BJ (cell line): ENCODE measurements at regions of chr5 and their contacts with region 1.

Region 1: DNA sequence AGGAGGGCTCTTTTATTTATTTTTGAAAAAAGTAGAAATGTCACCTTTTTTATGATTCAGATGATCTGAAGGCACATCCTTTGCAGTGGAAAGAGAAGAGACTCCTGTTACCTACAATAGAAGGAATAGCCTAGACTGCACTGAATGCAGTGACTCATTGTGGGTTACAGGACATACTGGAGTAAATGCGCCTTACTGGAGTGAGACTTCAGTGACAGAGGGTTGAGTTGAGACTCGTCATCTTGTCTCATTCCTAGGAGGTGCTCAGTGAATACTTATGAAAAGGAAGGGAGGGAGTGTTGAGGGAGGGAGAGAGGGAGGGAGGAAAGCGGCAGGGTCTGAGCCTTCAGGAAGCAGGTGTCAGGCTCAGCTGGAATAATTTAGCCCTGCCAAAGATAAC is 25.2 kb downstream of the ANKRA2 start:
- DNase-seq: no peak
- H3K4me3 ChIP-seq: no peak overlapping the region
- H3K27me3 ChIP-seq: no peaks in the 10 kb centered on the region
- CTCF ChIP-seq: no peak

Region 2: DNA sequence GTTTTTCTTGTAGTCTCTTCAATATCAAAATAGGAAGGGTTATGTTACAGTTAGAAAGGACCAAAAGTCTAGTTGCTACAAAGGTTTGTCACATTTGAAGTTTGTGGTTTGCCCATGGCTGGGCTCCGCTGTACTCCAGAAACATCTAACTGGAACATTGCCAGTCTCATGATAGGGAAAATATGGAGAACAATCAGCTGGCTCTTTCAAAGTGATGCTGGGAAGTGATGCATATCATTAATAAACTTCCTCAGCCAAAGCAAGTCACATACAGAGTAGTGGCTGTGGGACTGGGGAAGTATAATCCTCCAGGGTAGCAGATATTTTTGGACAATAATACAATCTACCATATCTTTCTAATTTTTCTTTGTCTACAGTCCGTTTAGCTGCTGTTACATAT is 33.1 kb before region 1 on chr5:
- CTCF ChIA-PET with region 1: interaction called, 19 read pairs
- POLR2A ChIA-PET with region 1: no interaction called
- DNase-seq: no peak
- H3K4me3 ChIP-seq: no peak overlapping the region
- H3K27me3 ChIP-seq: no peaks in the 10 kb centered on the region
- CTCF ChIP-seq: no peak

Region 3: DNA sequence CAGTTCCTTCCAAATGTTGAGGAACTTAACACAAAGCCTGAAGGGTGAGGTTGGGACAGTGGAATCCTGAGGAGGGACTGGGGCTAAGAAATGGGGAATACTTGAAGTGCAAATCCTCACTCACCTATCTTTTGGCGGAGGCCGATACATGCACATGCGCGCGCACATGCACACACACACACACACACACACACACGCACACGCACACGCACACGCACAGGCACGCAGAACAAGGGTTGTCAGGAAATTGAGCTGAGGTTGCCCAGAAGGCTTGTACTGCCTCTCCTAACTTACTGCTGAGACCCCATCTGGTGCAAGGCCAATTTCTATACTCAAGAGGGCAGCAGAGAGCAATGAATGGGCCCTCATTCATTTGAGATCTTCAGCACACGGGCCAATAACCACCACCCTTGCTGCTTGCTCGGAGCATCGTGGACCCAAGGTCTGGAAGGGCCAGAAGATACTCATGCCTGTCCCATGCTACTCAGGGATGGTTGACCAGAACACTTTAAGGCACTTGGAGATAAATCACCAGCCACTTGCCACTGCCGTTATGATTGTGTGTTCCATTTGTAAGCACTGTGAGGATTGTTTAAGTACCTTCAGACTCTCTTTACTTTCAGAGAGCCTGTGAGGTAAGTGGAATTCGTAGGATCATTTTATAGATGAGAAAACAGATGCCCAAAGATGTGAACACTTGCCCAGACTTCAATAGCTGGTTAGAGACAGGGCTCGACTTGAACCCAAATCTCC is 20.5 kb before region 1 on chr5:
- CTCF ChIA-PET with region 1: interaction called, 154 read pairs
- POLR2A ChIA-PET with region 1: no interaction called
- DNase-seq: no peak
- H3K4me3 ChIP-seq: no peak overlapping the region
- H3K27me3 ChIP-seq: no peaks in the 10 kb centered on the region
- CTCF ChIP-seq: peak; percentile 85

Region 4: GRCh38 chr5:73528248-73528647 is 11.9 kb before region 1 on chr5:
- CTCF ChIA-PET with region 1: interaction called, 154 read pairs
- POLR2A ChIA-PET with region 1: no interaction called
- DNase-seq: no peak
- H3K4me3 ChIP-seq: no peak overlapping the region
- H3K27me3 ChIP-seq: no peaks in the 10 kb centered on the region
- CTCF ChIP-seq: no peak

Region 5: DNA sequence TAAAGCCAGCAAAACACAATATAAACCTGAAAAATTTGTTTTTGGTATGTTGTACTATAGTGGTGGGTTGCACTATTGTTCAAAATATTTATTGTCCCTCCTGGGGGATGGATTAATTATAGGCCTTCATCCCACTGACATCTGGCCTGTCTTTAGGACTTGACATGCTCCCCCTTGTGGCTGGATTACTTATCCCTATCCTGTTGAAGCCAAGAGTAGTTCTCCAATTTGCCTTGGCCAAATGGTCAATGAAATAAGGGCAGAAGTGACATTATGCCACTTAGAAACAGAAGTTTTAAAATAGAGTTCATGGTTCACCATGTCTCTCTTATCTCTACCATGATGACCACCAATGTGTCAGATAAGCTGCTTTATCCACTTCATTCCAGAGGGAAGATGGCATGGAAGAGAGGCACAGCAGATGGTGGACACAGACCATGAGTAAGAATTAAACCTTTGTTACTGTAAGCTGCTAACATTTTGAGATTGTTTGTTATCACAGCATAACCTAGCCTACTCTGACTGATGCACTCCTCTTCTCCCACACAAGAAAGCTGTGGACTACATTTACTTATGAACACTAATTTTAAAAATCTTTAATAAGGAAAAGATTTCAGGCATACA is 56.6 kb after region 1 on chr5:
- CTCF ChIA-PET with region 1: no interaction called
- POLR2A ChIA-PET with region 1: no interaction called
- DNase-seq: no peak
- H3K4me3 ChIP-seq: no peak overlapping the region
- H3K27me3 ChIP-seq: no peaks in the 10 kb centered on the region
- CTCF ChIP-seq: peak; percentile 50

Region 6: GRCh38 chr5:73687357-73687756 is 147.2 kb after region 1 on chr5:
- CTCF ChIA-PET with region 1: no interaction called
- POLR2A ChIA-PET with region 1: no interaction called
- DNase-seq: no peak
- H3K4me3 ChIP-seq: no peak overlapping the region
- H3K27me3 ChIP-seq: no peaks in the 10 kb centered on the region
- CTCF ChIP-seq: no peak